Dorsolateral prefrontal cortex (tissue), 120 donors: ENCODE measurements at regions of chr6 and their contacts with region 1.

Region 1: GRCh38 chr6:162856885-162857284 is 129.1 kb downstream of the PACRG start:
- DNase-seq: peak in 7 of 10 donors; percentile 14 to 81 (median 64)
- H3K4me3 ChIP-seq: peak overlapping the region in 56 of 59 donors; percentile 17 to 67 (median 42)
- H3K27ac ChIP-seq: peak overlapping the region; percentile 72 to 98 (median 93)
- H3K27me3 ChIP-seq: no peaks in the 10 kb centered on the region
- CTCF ChIP-seq: peak; percentile 71 to 92 (median 84)

Region 2: DNA sequence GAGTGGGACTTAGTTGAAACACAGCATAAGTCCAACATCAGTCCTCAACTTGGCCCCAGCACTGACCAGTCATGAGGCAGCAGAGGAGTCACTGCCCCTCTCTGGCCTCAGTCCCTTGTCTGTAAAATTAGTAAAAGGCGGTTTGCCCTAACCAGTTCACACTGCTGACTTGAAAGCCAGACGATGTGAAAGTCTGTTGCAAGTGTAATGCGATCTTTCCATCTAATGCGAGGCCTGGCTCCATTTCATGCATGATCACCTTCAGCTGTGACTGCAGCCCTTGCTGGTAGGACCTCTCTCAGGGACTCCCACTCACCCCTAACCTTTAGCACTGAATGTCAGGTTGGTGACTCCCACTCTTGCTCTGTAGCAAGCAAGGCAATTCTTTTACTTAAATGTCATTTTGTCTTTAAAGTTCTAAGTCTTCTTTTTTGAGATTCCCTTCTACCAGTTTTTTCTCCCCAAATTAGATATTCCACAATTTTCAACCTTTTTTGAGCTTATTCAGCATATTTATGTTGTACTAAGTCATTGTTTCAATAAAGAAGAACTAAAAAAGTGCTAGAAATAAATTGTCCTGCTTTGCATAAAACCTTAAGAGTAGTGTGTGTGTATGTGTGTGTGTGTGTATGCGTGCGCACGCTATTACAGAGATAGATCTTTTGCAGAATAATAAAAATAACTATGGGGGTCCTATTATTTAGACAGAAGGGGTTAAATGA is 116.4 kb after region 1 on chr6:
- intact Hi-C with region 1: loop called in 1 of 2 experiments (anchors 10 kb)
- DNase-seq: no peak
- H3K4me3 ChIP-seq: peak overlapping the region in 23 of 59 donors; percentile 10 to 58 (median 31)
- H3K27ac ChIP-seq: peak overlapping the region in 6 of 59 donors; percentile 2 to 47 (median 8)
- H3K27me3 ChIP-seq: no peaks in the 10 kb centered on the region
- CTCF ChIP-seq: no peak

Region 3: GRCh38 chr6:163243083-163243482 is 386.2 kb after region 1 on chr6:
- intact Hi-C with region 1: loop called (anchors 5 kb)
- DNase-seq: peak; percentile 17 to 96 (median 90)
- H3K4me3 ChIP-seq: no peak overlapping the region
- H3K27ac ChIP-seq: peak overlapping the region; percentile 71 to 100 (median 98)
- H3K27me3 ChIP-seq: no peaks in the 10 kb centered on the region
- CTCF ChIP-seq: peak in 34 of 56 donors; percentile 12 to 53 (median 30)

Region 4: DNA sequence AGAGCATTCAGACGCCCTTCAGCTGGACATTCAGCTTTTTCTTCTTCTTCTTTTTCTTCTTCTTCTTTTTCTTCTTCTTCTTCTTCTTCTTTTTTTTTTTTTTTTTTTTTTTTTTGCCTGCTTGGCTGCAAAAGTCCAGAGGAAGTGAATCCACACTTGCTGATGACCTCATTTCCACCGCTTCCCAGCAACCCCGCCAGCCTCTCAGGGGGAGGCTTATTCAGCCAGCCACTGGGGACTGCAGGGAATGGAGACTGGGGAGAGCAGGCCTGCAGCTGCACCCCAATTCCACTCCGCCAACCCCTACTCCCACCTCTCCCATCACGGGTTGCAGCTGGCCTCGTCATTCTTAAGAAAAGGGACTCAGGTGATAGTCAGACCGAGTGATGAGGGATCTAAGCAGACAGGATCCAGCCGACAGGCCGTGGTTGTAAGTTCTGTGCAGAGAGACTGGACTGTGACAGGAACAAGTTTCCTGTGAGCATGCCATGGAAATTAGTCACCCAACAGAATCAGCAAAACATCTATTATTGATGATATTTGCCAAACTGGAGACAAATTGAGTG is 498.6 kb after region 1 on chr6:
- intact Hi-C with region 1: loop called in 1 of 2 experiments (anchors 2 kb)
- DNase-seq: peak in 7 of 10 donors; percentile 65 to 81 (median 74)
- H3K4me3 ChIP-seq: peak overlapping the region in 41 of 59 donors; percentile 1 to 48 (median 26)
- H3K27ac ChIP-seq: peak overlapping the region; percentile 51 to 100 (median 97)
- H3K27me3 ChIP-seq: no peaks in the 10 kb centered on the region
- CTCF ChIP-seq: peak in 2 of 56 donors; percentile 10 to 14

Region 5: GRCh38 chr6:163956571-163957407 is 1099.9 kb after region 1 on chr6:
- intact Hi-C with region 1: loop called in 1 of 2 experiments (anchors 10 kb)
- DNase-seq: peak; percentile 25 to 83 (median 74)
- H3K4me3 ChIP-seq: peak overlapping the region in 18 of 59 donors; percentile 1 to 45 (median 20)
- H3K27ac ChIP-seq: peak overlapping the region in 9 of 59 donors; percentile 0 to 35 (median 14)
- H3K27me3 ChIP-seq: no peaks in the 10 kb centered on the region
- CTCF ChIP-seq: peak; percentile 52 to 96 (median 89)